ENCODE measurements at regions of chr16 and their contacts with region 1.

Region 1: GRCh38 chr16:2500918-2501750 is 12.6 kb upstream of the ATP6V0C start:
- DNase-seq: peak in 1 of 2 experiments; percentile 85
- H3K4me3 ChIP-seq: no peak overlapping the region
- H3K27ac ChIP-seq: no peak overlapping the region
- H3K4me1 ChIP-seq: 0 out of 2 replicates have a peak, but pooled peaks cover 5% of the 10 kb centered on the region
- H3K27me3 ChIP-seq: no peaks in the 10 kb centered on the region
- CTCF ChIP-seq: peak; percentile 96

Region 2: DNA sequence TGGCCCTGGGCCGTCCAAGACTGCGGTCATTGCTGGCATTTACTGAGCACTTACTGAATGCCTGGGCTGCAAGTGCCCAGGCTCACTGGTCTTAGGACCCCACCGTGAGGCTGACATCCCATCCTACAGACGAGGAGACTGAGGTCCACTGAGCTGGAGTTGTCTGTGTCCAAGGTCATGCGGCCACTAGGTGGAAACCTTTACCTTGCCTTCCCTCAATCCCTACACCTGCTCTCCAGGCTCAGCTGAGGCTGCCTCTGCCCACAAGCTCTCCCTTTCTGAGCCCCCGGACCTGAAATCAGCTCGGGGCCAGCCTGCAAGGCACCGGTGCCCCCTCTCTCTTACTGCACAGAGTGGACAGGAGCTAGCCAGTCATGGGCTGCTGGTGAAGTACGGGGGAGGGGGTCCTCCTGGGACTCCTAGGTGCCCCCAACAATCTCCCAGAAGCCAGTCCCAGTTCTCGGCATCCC is 306.2 kb before region 1 on chr16:
- CTCF ChIA-PET with region 1: interaction called, 3 read pairs
- POLR2A ChIA-PET with region 1: no interaction called
- intact Hi-C with region 1: loop called (anchors 5 kb)
- DNase-seq: peak in 1 of 2 experiments; percentile 59
- H3K4me3 ChIP-seq: no peak overlapping the region
- H3K27ac ChIP-seq: no peak overlapping the region
- H3K4me1 ChIP-seq: no peaks in the 10 kb centered on the region
- H3K27me3 ChIP-seq: peaks cover 35% of the 10 kb centered on the region
- CTCF ChIP-seq: peak; percentile 70

Region 3: DNA sequence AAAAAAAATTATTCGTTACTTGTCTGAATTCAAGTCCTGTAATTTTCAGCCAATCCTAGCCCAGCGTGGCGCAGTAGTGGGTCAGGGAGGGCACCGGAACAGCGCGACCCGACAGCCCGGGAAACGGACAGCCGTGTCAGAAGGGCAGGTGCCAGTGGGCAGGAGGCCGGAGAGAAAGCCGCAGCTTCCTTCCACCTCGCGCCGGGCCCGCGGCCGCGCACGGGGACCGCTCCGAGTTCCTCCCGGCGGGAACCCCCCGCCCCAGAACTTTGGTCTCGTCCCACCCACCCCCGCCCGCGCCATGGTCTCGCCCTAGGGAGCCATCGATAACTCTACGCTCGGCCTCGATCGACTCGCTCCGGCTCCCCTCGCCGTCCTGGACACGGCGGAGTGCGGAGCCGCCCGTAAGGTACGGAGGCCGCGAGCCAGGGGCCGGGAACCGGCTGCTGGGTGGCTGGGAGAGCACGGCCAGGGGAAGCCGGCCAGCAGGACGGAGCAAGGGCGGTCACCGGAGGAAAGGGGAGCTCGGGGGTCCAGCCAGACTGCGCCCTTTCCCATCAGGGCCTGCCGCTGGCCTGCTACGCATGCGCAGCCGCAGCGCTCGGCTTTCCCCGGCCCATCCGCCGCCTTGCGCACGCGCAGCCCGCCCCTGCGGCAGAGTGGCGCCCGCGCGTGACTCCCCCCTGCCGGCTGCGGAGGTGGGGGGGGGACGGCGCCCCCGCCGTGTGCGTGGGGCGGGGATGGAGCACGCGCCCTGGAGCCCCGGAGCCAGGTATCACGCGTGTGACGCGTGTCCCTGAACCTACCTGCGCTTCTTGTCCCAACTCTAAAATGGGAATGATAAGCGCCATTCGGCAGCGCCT is 295.8 kb before region 1 on chr16 and contains the start of gene MLST8:
- CTCF ChIA-PET with region 1: interaction called, 15 read pairs
- POLR2A ChIA-PET with region 1: no interaction called
- intact Hi-C with region 1: no loop called
- DNase-seq: peak; percentile 56 to 90
- H3K4me3 ChIP-seq: peak within 1 kb of the TSS; percentile 91
- H3K27ac ChIP-seq: peak within 1 kb of the TSS; percentile 67
- H3K4me1 ChIP-seq: peaks cover 15% of the 10 kb centered on the region
- H3K27me3 ChIP-seq: no peaks in the 10 kb centered on the region
- CTCF ChIP-seq: 0 out of 2 replicates have a peak, but pooled peaks have one; percentile 18
- total RNA-seq, gene MLST8: 66.3 and 74.2 TPM in 2 replicates

Region 4: DNA sequence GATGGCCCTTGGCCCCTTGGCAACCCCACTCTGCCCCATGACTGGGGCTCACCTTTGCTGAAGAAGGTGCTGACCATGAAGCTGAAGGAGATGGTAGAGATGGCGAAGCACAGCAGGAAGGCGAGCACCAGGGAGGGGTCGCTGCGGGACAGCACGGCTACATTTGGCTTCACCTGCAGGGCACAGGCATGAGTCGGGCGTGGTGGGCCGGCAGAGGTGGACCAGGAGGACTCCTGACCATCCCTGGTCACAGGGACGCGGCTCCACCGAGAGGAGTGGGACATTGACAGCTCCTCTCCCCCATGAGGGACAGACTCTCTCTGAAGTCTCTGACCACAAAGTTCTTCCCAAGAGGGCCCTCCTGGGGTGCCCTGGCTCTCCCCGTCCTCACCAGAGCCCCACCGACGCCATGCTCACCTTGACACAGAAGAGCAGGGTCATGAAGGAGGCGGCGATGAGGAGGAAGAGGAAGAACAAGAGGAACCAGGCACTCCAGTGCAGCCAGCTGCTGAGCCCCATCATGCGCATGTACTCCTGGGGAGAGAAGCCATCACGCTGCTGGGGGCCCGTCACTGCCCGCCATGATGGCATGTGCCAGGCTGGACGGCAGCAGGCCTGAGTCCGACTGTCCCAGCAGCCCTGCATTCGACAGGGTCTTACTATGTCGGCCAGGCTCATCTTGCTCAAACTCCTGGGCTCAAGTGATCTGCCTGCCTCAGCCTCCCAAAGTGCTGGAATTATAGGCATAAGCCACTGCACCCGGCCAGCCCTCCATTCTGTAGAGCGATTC is 183.7 kb before region 1 on chr16:
- CTCF ChIA-PET with region 1: no interaction called
- POLR2A ChIA-PET with region 1: no interaction called
- intact Hi-C with region 1: no loop called
- DNase-seq: no peak
- H3K4me3 ChIP-seq: no peak overlapping the region
- H3K27ac ChIP-seq: no peak overlapping the region
- H3K4me1 ChIP-seq: no peaks in the 10 kb centered on the region
- H3K27me3 ChIP-seq: peaks cover 25% of the 10 kb centered on the region
- CTCF ChIP-seq: no peak

Region 5: DNA sequence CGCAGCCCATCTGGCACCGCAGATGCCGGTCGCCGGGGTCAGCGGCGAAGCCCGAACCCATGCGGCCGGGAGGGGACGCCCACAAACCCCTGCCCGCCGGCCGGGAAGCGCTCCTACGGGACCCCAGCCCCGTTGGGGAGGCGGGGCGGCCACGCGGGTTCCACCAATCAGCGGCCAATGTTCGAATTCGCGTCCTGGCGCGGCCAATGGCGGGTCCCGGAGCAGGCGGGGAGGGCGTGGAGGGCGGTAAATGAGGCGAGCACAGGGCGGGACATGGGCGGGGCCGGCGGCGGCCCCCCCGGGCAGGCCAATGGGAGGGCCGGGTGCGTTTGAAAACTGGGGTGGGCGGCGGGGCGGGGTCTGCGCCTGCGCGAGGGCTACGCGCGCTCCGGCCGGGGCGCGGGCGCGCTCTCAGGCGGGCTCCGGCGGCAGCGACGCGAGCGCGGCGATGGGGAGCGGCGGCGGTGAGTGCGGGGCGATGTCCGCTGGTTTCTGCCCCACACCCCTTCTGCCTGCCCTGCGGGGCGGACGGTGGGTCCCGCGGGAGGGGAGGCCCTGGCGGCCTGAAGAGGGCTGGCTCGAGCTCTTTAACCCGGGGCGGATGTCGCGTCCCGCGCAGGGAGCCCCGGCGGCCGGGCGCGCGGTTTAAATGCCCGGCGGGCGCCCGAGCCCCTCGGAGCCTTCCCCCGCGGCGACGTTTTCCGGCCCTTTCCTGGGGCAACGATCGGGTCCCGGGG is 71.9 kb before region 1 on chr16 and contains the start of gene CCNF:
- CTCF ChIA-PET with region 1: no interaction called
- POLR2A ChIA-PET with region 1: no interaction called
- intact Hi-C with region 1: loop called (anchors 5 kb)
- DNase-seq: peak; percentile 80 to 98
- H3K4me3 ChIP-seq: peak within 1 kb of the TSS; percentile 99
- H3K27ac ChIP-seq: no peak within 1 kb of the TSS
- H3K4me1 ChIP-seq: peaks cover 40% of the 10 kb centered on the region
- H3K27me3 ChIP-seq: no peaks in the 10 kb centered on the region
- CTCF ChIP-seq: no peak
- total RNA-seq, gene CCNF: 53.4 and 69.0 TPM in 2 replicates

Region 6: DNA sequence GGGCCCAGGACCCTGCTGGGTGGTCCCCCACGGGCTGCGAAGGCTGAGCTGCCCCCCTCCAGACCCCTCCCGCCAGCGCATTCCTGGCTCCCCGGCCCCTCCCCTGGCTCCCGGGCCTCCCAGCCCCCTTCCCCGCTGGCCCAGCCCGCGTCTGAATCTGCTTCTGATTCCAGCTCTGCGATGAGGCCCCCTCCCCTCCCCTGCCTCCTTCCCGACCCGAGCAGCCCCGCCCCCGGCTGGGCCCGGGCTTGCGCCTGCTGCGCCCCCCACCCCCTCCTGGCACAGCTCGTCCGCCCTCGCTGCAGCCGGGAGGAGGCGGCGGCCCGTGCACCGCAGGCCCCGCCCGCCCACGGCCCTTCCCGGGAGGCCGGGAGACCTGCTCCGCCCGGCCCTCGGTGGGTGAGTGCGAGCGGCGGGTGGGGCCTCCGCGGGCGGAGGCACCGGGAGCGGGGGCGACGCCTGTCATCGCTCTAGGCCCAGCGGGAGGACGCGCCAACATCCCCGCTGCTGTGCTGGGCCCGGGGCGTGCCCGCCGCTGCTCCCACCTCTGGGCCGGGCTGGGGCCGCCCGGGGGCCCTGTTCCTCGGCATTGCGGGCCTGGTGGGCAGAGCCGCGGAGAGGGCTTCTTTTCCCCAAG is 30.0 kb before region 1 on chr16 and contains the start of gene NTN3:
- CTCF ChIA-PET with region 1: no interaction called
- POLR2A ChIA-PET with region 1: no interaction called
- intact Hi-C with region 1: no loop called
- DNase-seq: peak in 1 of 2 experiments; percentile 28
- H3K4me3 ChIP-seq: no peak within 1 kb of the TSS
- H3K27ac ChIP-seq: no peak within 1 kb of the TSS
- H3K4me1 ChIP-seq: peaks cover 24% of the 10 kb centered on the region; the same call in 1 of the 2 replicates
- H3K27me3 ChIP-seq: no peaks in the 10 kb centered on the region
- CTCF ChIP-seq: no peak
- total RNA-seq, gene NTN3: 0.87 and 0.90 TPM in 2 replicates

Region 7: DNA sequence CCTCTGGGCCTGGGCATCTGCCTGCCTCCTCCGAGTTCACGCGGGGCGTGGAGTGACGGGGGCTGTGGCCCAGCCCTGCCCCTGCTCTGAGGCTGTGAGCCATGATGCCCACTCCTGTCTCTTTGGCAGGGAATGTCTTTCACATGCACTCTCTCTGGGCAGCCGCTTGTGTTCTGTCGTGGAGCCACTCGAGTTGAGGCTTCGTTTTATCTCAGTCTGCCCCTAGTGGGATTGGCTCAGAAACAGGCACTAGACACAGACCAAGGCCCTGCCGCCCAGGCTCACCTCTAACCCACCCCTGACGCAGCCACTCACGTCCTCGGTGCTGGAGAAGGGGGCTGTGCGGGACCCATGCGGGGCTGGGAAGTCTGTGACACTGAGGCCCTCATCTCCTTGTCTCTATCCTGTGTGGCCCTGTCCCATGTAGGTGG is 113.6 kb after region 1 on chr16:
- CTCF ChIA-PET with region 1: no interaction called
- POLR2A ChIA-PET with region 1: no interaction called
- intact Hi-C with region 1: no loop called
- DNase-seq: no peak
- H3K4me3 ChIP-seq: no peak overlapping the region
- H3K27ac ChIP-seq: no peak overlapping the region
- H3K4me1 ChIP-seq: no peaks in the 10 kb centered on the region
- H3K27me3 ChIP-seq: no peaks in the 10 kb centered on the region
- CTCF ChIP-seq: no peak

Region 8: GRCh38 chr16:2707368-2708292 is 206.5 kb after region 1 on chr16:
- CTCF ChIA-PET with region 1: no interaction called
- POLR2A ChIA-PET with region 1: no interaction called
- intact Hi-C with region 1: no loop called
- DNase-seq: no peak
- H3K4me3 ChIP-seq: no peak overlapping the region
- H3K27ac ChIP-seq: no peak overlapping the region
- H3K4me1 ChIP-seq: no peaks in the 10 kb centered on the region
- H3K27me3 ChIP-seq: no peaks in the 10 kb centered on the region
- CTCF ChIP-seq: no peak

Measured in PC-9 (cell line).